Lower leg skin (tissue), 4 donors: ENCODE measurements at regions of chr15 and their contacts with region 1.

Region 1: DNA sequence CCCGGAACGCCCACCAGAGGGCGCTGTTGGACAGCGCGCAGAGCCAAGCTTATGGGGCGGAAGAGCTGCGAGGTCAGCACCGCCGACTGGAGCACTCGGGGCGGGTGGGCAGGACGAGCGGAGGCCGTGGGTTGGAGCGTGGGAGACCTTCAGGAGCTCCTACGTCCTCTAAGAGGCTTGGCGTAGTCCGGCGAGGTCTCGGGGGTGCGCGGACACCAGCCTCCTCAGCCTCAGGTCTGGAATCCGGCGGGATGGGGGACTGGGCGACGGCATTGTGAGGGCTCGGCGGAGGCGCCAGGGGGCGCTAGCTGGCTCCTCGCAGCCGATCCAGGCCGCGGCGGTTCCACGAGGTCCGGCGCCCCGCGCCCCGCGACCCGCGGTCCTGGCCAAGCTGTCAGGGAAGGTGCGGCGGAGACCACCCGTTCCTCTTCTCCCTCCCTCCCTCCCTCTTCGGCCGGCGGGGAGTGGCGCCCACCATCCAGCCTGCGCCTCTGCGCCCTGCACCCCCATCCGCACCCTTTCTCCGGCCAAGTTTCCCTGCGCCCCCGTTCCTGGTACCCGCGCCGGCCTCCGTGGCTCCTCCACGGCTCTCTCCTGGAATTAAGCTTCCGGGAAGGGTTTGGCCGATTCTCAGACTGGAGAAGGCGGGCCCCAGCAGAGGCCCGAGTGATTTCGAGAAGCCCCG is 24.3 kb upstream of the POLG start:
- DNase-seq: peak; percentile 58 to 95
- H3K4me3 ChIP-seq: no peak overlapping the region
- CTCF ChIP-seq: peak in 1 of 3 donors; percentile 72
- POLR2A ChIP-seq: no peak

Region 2: DNA sequence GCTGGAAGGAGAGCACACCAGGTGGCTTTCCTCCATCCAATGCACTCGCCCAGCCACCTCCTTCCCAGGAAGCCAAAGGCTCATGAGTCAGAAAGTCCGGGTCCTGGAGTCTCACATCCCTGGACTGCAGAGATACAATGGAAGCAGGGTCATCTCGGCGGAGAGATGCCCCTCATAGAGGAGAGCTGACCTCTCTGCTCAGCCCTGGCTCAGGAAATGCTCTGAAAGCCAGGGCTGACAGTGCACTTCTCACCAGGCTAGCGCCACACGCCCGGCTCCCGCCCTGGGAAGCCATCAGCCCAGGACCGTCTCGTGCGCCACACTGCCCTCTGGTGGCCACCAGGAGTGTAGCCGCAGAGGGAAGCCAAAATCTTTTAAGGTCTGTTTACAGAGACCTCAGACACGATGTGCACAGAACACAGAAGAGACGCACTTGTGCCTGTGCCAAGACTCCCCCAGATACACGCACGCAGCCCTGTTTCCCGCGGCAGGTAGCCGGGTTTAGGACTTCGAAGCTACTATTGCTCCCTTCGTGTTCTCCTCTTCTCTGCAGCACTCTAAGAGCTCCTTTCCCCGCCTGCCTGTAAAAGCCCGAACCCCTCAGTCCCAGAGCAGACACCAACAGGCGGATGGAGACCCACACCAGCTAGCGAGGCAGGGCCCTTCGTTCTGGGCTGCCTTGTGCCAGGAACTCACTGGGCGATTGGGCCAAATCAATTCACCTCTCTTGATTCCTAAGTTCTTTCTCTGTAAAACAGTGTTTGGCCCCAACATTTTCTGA is 1112.0 kb before region 1 on chr15:
- intact Hi-C with region 1: no loop called
- DNase-seq: peak; percentile 59 to 95
- H3K4me3 ChIP-seq: no peak overlapping the region
- CTCF ChIP-seq: peak in 1 of 3 donors; percentile 62
- POLR2A ChIP-seq: no peak

Region 3: GRCh38 chr15:89139400-89140166 is 219.3 kb before region 1 on chr15:
- intact Hi-C with region 1: no loop called
- DNase-seq: no peak
- H3K4me3 ChIP-seq: no peak overlapping the region
- CTCF ChIP-seq: no peak
- POLR2A ChIP-seq: no peak

Region 4: GRCh38 chr15:89278307-89278706 is 80.6 kb before region 1 on chr15:
- intact Hi-C with region 1: no loop called
- DNase-seq: no peak
- H3K4me3 ChIP-seq: no peak overlapping the region
- CTCF ChIP-seq: no peak
- POLR2A ChIP-seq: no peak

Region 5: DNA sequence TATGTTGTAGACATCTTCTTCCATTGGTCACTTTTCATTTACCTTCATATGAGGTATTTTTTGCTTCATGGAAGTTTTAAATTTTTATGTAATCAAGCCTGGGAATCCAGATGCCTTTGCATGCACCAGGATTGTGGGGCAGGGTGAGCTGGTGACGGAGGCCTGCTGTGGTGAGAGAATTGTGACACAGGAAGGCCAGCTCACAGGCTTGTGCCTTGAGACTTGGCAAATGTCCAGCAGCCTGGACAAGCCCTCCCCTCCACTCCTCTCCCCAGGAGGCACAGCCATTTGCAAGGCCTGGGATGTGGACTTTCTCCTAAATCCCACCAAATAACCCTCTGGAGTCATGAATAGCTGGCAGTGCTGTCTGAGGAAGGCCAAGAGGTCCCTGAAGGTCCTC is 70.1 kb after region 1 on chr15:
- intact Hi-C with region 1: loop called (anchors 5 kb)
- DNase-seq: no peak
- H3K4me3 ChIP-seq: no peak overlapping the region
- CTCF ChIP-seq: no peak
- POLR2A ChIP-seq: no peak